ENCODE measurements at regions of chr13 and their contacts with region 1.

Region 1: GRCh38 chr13:79501538-79502232 is 20.7 kb downstream of the NDFIP2 start:
- DNase-seq: no peak
- H3K4me3 ChIP-seq: no peak overlapping the region
- CTCF ChIP-seq: no peak

Region 2: DNA sequence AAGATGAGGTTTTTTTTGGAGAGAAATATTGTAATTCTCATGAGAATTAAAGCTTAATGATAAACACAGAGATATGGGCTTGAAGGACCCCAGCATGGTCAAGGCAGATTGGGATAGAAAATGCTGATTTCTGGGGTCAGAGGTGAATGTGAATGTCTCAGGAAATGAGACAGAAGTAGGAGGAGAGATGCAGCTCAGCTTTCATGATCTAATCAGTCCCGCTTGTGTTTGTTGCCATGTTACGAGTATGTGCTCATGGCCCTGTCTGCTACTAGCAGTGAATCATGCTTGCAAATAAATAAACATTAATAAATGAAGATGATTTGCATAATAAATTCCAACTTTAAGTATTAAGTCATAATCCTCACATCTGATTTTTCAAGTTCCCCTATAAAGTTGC is 43.7 kb before region 1 on chr13:
- in situ Hi-C with region 1: loop called (anchors 5 kb)
- DNase-seq: no peak
- H3K4me3 ChIP-seq: no peak overlapping the region
- CTCF ChIP-seq: no peak

Measured in astrocyte of the cerebellum (primary cell).